SK-N-SH (cell line): ENCODE measurements at regions of chr1 and their contacts with region 1.

Region 1: DNA sequence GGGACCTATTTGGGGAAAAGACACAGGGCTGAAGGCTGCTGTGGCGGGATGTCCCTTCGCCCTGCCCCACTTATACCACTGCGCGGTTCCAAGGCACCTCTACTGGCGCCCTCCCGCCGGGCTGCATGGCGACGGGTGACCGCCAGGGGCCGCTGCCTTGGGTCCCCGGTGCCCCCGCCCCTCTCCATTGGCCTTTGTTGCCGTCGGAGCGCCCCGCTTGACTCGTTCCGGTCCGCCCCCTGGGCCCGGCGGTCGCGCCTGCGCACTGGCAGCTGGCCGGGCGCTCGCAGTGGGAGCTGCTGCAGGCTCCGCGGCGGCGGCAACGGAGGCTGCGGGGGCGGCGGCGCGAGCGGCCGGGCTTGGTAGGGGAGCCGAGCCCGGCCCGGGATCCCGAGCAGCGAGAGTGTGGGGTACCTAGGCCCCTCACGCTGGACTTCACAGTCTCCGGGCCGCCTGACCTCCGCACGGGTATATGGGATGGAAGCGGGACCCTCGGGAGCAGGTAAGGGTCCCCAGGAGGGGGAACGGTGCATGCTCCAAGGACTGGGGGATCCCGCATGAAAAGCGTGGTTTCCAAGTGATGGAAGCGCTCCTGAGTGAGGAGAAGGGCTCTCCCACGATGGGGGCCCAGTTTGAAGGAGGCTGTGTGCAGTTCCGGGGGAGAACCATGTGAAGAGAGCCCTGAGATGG is at the start of gene AGO1:
- DNase-seq: peak; percentile 100
- H3K4me3 ChIP-seq: peak within 1 kb of the TSS; percentile 96 to 99
- H3K27ac ChIP-seq: peak within 1 kb of the TSS; percentile 40 to 86; a peak in 3 of 4 replicates
- H3K4me1 ChIP-seq: peaks cover 12 to 33% of the 10 kb centered on the region in 2 experiments; a peak in 2 of 4 replicates
- H3K27me3 ChIP-seq: no peaks in the 10 kb centered on the region
- CTCF ChIP-seq: peak; percentile 83
- EP300 ChIP-seq: no peak
- RAD21 ChIP-seq: peak; percentile 48
- polyA plus RNA-seq, gene AGO1: 7.8 and 9.5 TPM in 2 replicates

Region 2: GRCh38 chr1:35851132-35851869 is 31.8 kb before region 1 on chr1:
- CTCF ChIA-PET with region 1: interaction called, 22 read pairs
- POLR2A ChIA-PET with region 1: no interaction called
- DNase-seq: no peak
- H3K4me3 ChIP-seq: no peak overlapping the region
- H3K27ac ChIP-seq: peak overlapping the region in 1 of 2 experiments; percentile 69; a peak in 1 of 4 replicates
- H3K4me1 ChIP-seq: peaks cover 0 to 11% of the 10 kb centered on the region in 2 experiments; a peak in 2 of 4 replicates
- H3K27me3 ChIP-seq: no peaks in the 10 kb centered on the region
- CTCF ChIP-seq: no peak
- EP300 ChIP-seq: no peak
- RAD21 ChIP-seq: no peak

Region 3: GRCh38 chr1:35857830-35858229 is 25.3 kb before region 1 on chr1:
- CTCF ChIA-PET with region 1: interaction called, 26 read pairs
- POLR2A ChIA-PET with region 1: no interaction called
- DNase-seq: no peak
- H3K4me3 ChIP-seq: no peak overlapping the region
- H3K27ac ChIP-seq: no peak overlapping the region
- H3K4me1 ChIP-seq: peaks cover 0 to 11% of the 10 kb centered on the region in 2 experiments; a peak in 2 of 4 replicates
- H3K27me3 ChIP-seq: no peaks in the 10 kb centered on the region
- CTCF ChIP-seq: peak; percentile 32; the same call in 1 of the 2 replicates
- EP300 ChIP-seq: no peak
- RAD21 ChIP-seq: peak; percentile 54

Region 4: DNA sequence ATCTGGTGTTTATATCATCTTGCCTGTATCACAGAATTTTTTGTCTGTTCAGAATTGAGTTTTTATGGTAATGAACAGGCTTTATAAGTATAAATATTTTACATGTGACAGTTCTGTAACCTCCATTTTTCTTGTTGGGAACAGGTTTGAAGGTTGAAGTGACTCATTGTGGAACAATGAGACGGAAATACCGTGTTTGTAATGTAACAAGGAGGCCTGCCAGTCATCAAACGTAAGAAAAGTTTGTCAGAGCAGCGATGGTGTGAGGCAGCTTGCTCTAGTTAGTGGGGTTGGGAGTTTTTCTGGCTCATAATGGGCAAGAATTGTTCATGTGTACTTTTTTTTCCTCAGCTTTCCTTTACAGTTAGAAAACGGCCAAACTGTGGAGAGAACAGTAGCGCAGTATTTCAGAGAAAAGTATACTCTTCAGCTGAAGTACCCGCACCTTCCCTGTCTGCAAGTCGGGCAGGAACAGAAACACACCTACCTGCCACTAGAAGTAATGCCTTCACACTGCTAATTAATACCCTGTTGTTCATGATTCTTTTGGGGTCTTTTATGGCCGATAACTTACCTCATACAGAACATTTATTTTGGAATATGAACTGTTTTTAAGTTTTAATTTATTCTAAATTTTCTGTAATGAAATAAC is 125.6 kb after region 1 on chr1:
- CTCF ChIA-PET with region 1: no interaction called
- POLR2A ChIA-PET with region 1: no interaction called
- DNase-seq: no peak
- H3K4me3 ChIP-seq: no peak overlapping the region
- H3K27ac ChIP-seq: peak overlapping the region; percentile 64 to 78
- H3K4me1 ChIP-seq: peaks cover 0 to 14% of the 10 kb centered on the region in 2 experiments; a peak in 2 of 4 replicates
- H3K27me3 ChIP-seq: no peaks in the 10 kb centered on the region
- CTCF ChIP-seq: no peak
- EP300 ChIP-seq: 0 out of 4 replicates have a peak, but pooled peaks of 1 of the 2 experiments have one; percentile 16
- RAD21 ChIP-seq: no peak

Region 5: GRCh38 chr1:36055706-36056105 is 172.6 kb after region 1 on chr1:
- CTCF ChIA-PET with region 1: no interaction called
- POLR2A ChIA-PET with region 1: no interaction called
- DNase-seq: no peak
- H3K4me3 ChIP-seq: no peak overlapping the region
- H3K27ac ChIP-seq: no peak overlapping the region
- H3K4me1 ChIP-seq: no peaks in the 10 kb centered on the region
- H3K27me3 ChIP-seq: no peaks in the 10 kb centered on the region
- CTCF ChIP-seq: no peak
- EP300 ChIP-seq: no peak
- RAD21 ChIP-seq: no peak